ENCODE measurements at regions of chr16 and their contacts with region 1.

Region 1: DNA sequence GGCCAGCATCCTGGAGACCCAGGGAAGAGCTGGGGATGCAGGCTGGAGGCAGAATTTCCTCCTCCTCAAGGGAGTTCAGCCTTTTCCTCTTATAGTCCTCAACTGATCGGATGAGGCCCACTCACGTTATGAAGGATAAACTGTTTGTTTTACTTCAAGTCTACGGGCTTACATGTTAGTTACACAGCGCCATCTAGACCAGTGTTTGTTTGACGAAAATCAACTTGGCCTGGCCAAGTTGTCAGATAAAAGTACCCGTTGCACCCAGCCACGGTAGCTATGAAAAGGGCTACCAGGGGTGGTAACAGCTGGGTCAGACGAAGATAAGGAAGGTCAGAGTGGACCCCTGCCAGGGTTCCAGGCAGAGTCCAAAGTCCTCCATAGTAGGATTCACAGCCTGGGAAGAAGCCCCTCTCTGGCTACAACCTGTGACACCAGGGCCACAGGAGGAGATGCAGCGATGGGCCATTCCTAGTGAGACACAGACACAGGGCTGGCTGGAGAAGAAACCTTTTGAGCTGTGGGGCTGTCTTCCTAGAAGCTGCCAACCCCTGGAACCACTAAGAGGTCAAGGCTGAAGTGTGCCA is 39.4 kb downstream of the MEAK7 start:
- DNase-seq: no peak
- H3K4me3 ChIP-seq: no peak overlapping the region
- H3K27ac ChIP-seq: no peak overlapping the region
- H3K4me1 ChIP-seq: no peaks in the 10 kb centered on the region
- H3K27me3 ChIP-seq: no peaks in the 10 kb centered on the region
- CTCF ChIP-seq: no peak
- EP300 ChIP-seq: no peak
- POLR2A ChIP-seq: no peak

Region 2: GRCh38 chr16:84421938-84422220 is 43.2 kb before region 1 on chr16:
- in situ Hi-C with region 1: no loop called
- intact Hi-C with region 1: loop called (anchors 1 kb)
- DNase-seq: no peak
- H3K4me3 ChIP-seq: no peak overlapping the region
- H3K27ac ChIP-seq: no peak overlapping the region
- H3K4me1 ChIP-seq: no peaks in the 10 kb centered on the region
- H3K27me3 ChIP-seq: no peaks in the 10 kb centered on the region
- CTCF ChIP-seq: no peak
- EP300 ChIP-seq: no peak
- POLR2A ChIP-seq: no peak

Measured in transverse colon (tissue), 4 donors.